ENCODE measurements at regions of chr3 and their contacts with region 1.

Region 1: GRCh38 chr3:42880601-42881451 is 5.1 kb upstream of the CYP8B1 start:
- DNase-seq: peak; percentile 71 to 93 (median 82)
- ATAC-seq: peak; percentile 99
- H3K4me3 ChIP-seq: peak overlapping the region; percentile 11 to 61
- H3K4me3 Mint-ChIP-seq: peak overlapping the region; percentile 64 to 74 (median 70)
- H3K27ac ChIP-seq: peak overlapping the region; percentile 49
- H3K27ac Mint-ChIP-seq: peak overlapping the region; percentile 64 to 79
- H3K4me1 ChIP-seq: peaks cover 4 to 16% of the 10 kb centered on the region in 2 experiments
- H3K4me1 Mint-ChIP-seq: peaks cover 9 to 11% (median 10%) of the 10 kb centered on the region in 3 donors
- H3K27me3 ChIP-seq: peaks cover 0 to 10% of the 10 kb centered on the region in 2 experiments
- H3K27me3 Mint-ChIP-seq: peaks cover 0 to 3% of the 10 kb centered on the region in 2 donors

Region 2: GRCh38 chr3:42780892-42781700 is 99.7 kb before region 1 on chr3:
- CTCF ChIA-PET with region 1: interaction called, 10 to 24 read pairs
- POLR2A ChIA-PET with region 1: interaction called in 1 of 2 experiments, 5 read pairs
- DNase-seq: peak in 9 of 35 experiments; percentile 13 to 87 (median 24)
- ATAC-seq: peak; percentile 73 to 79 (median 78)
- H3K4me3 ChIP-seq: no peak overlapping the region
- H3K4me3 Mint-ChIP-seq: no peak overlapping the region
- H3K27ac ChIP-seq: no peak overlapping the region
- H3K27ac Mint-ChIP-seq: no peak overlapping the region
- H3K4me1 ChIP-seq: no peaks in the 10 kb centered on the region
- H3K4me1 Mint-ChIP-seq: peaks cover 0 to 2% (median 0%) of the 10 kb centered on the region in 3 donors
- H3K27me3 ChIP-seq: no peaks in the 10 kb centered on the region
- H3K27me3 Mint-ChIP-seq: no peaks in the 10 kb centered on the region

Region 3: DNA sequence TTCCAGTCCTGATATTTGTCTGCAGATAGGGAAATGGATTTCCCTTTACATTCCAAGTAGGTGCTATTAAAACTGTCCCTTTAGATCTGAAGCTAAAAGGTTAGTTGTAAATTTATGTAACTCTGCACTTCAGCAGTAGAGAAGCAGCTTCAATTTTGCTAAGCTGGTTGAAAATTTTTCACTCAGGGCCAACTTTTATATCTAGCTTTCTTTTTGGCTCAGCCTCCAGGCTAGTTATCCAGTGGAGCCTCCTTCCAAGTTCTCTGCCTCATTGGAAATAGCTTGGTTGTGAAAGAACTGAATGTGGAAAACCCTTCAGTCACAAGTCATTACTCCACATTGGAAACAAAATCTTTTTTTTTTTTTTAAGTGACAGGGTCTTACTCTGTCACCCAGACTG is 1695.8 kb after region 1 on chr3:
- CTCF ChIA-PET with region 1: no interaction called
- POLR2A ChIA-PET with region 1: no interaction called
- DNase-seq: no peak
- ATAC-seq: no peak
- H3K4me3 ChIP-seq: no peak overlapping the region
- H3K4me3 Mint-ChIP-seq: no peak overlapping the region
- H3K27ac ChIP-seq: no peak overlapping the region
- H3K27ac Mint-ChIP-seq: no peak overlapping the region
- H3K4me1 ChIP-seq: no peaks in the 10 kb centered on the region
- H3K4me1 Mint-ChIP-seq: no peaks in the 10 kb centered on the region
- H3K27me3 ChIP-seq: peaks cover 0 to 3% of the 10 kb centered on the region in 2 experiments
- H3K27me3 Mint-ChIP-seq: no peaks in the 10 kb centered on the region